ENCODE measurements at regions of chr10 and their contacts with region 1.

Region 1: GRCh38 chr10:133261726-133262325 is 14.8 kb downstream of the ADAM8 start:
- DNase-seq: peak; percentile 95
- H3K4me3 Mint-ChIP-seq: peak overlapping the region; percentile 85
- H3K27ac Mint-ChIP-seq: peak overlapping the region; percentile 48
- H3K4me1 Mint-ChIP-seq: peaks cover 61% of the 10 kb centered on the region
- H3K27me3 Mint-ChIP-seq: peaks cover 3% of the 10 kb centered on the region

Region 2: GRCh38 chr10:132961787-132962622 is 299.8 kb before region 1 on chr10:
- intact Hi-C with region 1: loop called (anchors 5 kb)
- DNase-seq: peak; percentile 91
- H3K4me3 Mint-ChIP-seq: peak overlapping the region; percentile 84
- H3K27ac Mint-ChIP-seq: peak overlapping the region; percentile 74
- H3K4me1 Mint-ChIP-seq: peaks cover 17% of the 10 kb centered on the region
- H3K27me3 Mint-ChIP-seq: peaks cover 16% of the 10 kb centered on the region

Region 3: GRCh38 chr10:133278577-133279265 is 16.9 kb after region 1 on chr10:
- intact Hi-C with region 1: loop called (anchors 1 kb)
- DNase-seq: peak; percentile 87
- H3K4me3 Mint-ChIP-seq: peak overlapping the region; percentile 79
- H3K27ac Mint-ChIP-seq: peak overlapping the region; percentile 88
- H3K4me1 Mint-ChIP-seq: peaks cover 28% of the 10 kb centered on the region
- H3K27me3 Mint-ChIP-seq: no peaks in the 10 kb centered on the region

Region 4: GRCh38 chr10:133378251-133379096 is 116.6 kb after region 1 on chr10:
- intact Hi-C with region 1: loop called (anchors 5 kb)
- DNase-seq: peak; percentile 90
- H3K4me3 Mint-ChIP-seq: peak overlapping the region; percentile 80
- H3K27ac Mint-ChIP-seq: peak overlapping the region; percentile 51
- H3K4me1 Mint-ChIP-seq: peaks cover 7% of the 10 kb centered on the region
- H3K27me3 Mint-ChIP-seq: peaks cover 3% of the 10 kb centered on the region